K562 (cell line): ENCODE measurements at regions of chr17 and their contacts with region 1.

Region 1: GRCh38 chr17:5194346-5194745 is 2.7 kb upstream of the ZNF594 start:
- DNase-seq: no peak
- ATAC-seq: no peak
- H3K4me3 ChIP-seq: no peak overlapping the region
- H3K27ac ChIP-seq: no peak overlapping the region
- H3K4me1 ChIP-seq: peaks cover 0 to 5% of the 10 kb centered on the region in 2 experiments; a peak in 3 of 5 replicates
- H3K27me3 ChIP-seq: no peaks in the 10 kb centered on the region
- CTCF ChIP-seq: no peak
- EP300 ChIP-seq: no peak
- POLR2A ChIP-seq: no peak
- RAD21 ChIP-seq: no peak

Region 2: GRCh38 chr17:5237541-5238016 is 43.2 kb after region 1 on chr17:
- CTCF ChIA-PET with region 1: interaction called, 9 read pairs
- POLR2A ChIA-PET with region 1: no interaction called
- in situ Hi-C with region 1: no loop called
- intact Hi-C with region 1: loop called (anchors 1 kb)
- DNase-seq: peak; percentile 68 to 78 (median 75)
- ATAC-seq: peak; percentile 98
- H3K4me3 ChIP-seq: no peak overlapping the region
- H3K27ac ChIP-seq: no peak overlapping the region
- H3K4me1 ChIP-seq: no peaks in the 10 kb centered on the region; a peak in 1 of 5 replicates
- H3K27me3 ChIP-seq: peaks cover 0 to 16% of the 10 kb centered on the region in 2 experiments; a peak in 2 of 5 replicates
- CTCF ChIP-seq: peak; percentile 82 to 90 (median 88)
- EP300 ChIP-seq: no peak
- POLR2A ChIP-seq: no peak
- RAD21 ChIP-seq: peak; percentile 57 to 72

Region 3: DNA sequence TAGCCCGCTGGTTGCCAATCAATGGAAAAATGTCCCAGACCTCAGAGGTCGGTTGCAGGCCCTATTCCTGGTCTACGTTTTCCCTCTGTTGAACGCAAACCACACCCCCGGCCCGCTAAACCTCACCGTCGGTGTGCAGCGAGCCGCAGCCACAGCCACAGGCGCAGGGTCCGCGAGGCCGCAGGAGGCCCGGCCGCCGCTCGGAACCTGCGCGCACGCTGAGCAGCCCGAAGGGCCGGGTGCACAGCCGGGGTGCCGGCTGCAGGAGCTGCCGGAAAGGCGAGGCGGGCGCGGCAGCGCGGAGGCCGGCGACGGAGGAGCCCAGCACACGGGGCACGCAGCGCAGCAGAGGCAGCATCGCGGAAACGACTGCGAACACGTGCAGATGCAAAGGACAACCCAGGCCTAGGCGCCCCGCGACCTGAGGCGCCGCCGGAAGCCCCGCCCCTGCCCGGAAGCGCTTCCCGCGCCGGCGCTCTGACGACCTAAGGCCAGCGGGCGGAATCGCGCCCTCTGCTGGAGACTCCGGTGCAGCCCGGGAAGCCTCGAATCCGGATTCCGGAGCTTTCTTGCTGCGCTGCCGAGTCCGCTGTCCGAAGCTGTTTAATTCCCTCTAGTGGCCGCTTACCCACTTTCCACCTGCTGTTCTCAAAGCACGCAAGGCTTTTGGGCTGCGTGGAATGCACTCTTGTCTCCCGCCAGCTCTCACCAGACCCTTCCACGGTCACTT is 244.5 kb after region 1 on chr17 and contains the start of gene C1QBP:
- CTCF ChIA-PET with region 1: no interaction called
- POLR2A ChIA-PET with region 1: no interaction called
- in situ Hi-C with region 1: no loop called
- intact Hi-C with region 1: loop called (anchors 5 kb)
- DNase-seq: peak; percentile 85 to 94 (median 88)
- ATAC-seq: peak; percentile 95
- H3K4me3 ChIP-seq: peak within 1 kb of the TSS; percentile 94
- H3K27ac ChIP-seq: peak within 1 kb of the TSS; percentile 85
- H3K4me1 ChIP-seq: peaks cover 8 to 9% of the 10 kb centered on the region in 2 experiments; a peak in 4 of 5 replicates
- H3K27me3 ChIP-seq: no peaks in the 10 kb centered on the region
- CTCF ChIP-seq: peak; percentile 93 to 98 (median 98)
- EP300 ChIP-seq: no peak
- POLR2A ChIP-seq: peak; percentile 67; the same call in 1 of the 2 replicates
- RAD21 ChIP-seq: peak; percentile 54 to 77
- polyA plus RNA-seq, gene C1QBP: 90.7 to 107 TPM